CD8-positive, alpha-beta T cell (primary cell): ENCODE measurements at regions of chr17 and their contacts with region 1.

Region 1: GRCh38 chr17:38674749-38675615 is at the start of gene EPOP:
- DNase-seq: peak; percentile 51 to 91 (median 80)
- ATAC-seq: peak; percentile 80
- H3K4me3 ChIP-seq: peak within 1 kb of the TSS; percentile 34 to 58
- H3K4me3 Mint-ChIP-seq: peak within 1 kb of the TSS; percentile 75
- H3K27ac ChIP-seq: no peak within 1 kb of the TSS
- H3K27ac Mint-ChIP-seq: no peak within 1 kb of the TSS
- H3K4me1 ChIP-seq: peaks cover 17% of the 10 kb centered on the region
- H3K4me1 Mint-ChIP-seq: peaks cover 26% of the 10 kb centered on the region
- H3K27me3 ChIP-seq: peaks cover 4 to 14% of the 10 kb centered on the region in 2 experiments
- H3K27me3 Mint-ChIP-seq: peaks cover 28% of the 10 kb centered on the region
- CTCF ChIP-seq: no peak
- total RNA-seq, gene EPOP: 0.89 to 0.98 TPM

Region 2: GRCh38 chr17:38557836-38558727 is 116.9 kb before region 1 on chr17:
- CTCF ChIA-PET with region 1: interaction called, 4 read pairs
- POLR2A ChIA-PET with region 1: interaction called, 3 read pairs
- intact Hi-C with region 1: loop called in 1 of 2 experiments (anchors 2 kb)
- DNase-seq: peak; percentile 75 to 94 (median 88)
- ATAC-seq: peak; percentile 74
- H3K4me3 ChIP-seq: peak overlapping the region; percentile 60 to 77
- H3K4me3 Mint-ChIP-seq: peak overlapping the region; percentile 92
- H3K27ac ChIP-seq: no peak overlapping the region
- H3K27ac Mint-ChIP-seq: no peak overlapping the region
- H3K4me1 ChIP-seq: peaks cover 28% of the 10 kb centered on the region
- H3K4me1 Mint-ChIP-seq: peaks cover 26% of the 10 kb centered on the region
- H3K27me3 ChIP-seq: peaks cover 17 to 27% of the 10 kb centered on the region in 2 experiments
- H3K27me3 Mint-ChIP-seq: peaks cover 24% of the 10 kb centered on the region
- CTCF ChIP-seq: peak; percentile 93

Region 3: DNA sequence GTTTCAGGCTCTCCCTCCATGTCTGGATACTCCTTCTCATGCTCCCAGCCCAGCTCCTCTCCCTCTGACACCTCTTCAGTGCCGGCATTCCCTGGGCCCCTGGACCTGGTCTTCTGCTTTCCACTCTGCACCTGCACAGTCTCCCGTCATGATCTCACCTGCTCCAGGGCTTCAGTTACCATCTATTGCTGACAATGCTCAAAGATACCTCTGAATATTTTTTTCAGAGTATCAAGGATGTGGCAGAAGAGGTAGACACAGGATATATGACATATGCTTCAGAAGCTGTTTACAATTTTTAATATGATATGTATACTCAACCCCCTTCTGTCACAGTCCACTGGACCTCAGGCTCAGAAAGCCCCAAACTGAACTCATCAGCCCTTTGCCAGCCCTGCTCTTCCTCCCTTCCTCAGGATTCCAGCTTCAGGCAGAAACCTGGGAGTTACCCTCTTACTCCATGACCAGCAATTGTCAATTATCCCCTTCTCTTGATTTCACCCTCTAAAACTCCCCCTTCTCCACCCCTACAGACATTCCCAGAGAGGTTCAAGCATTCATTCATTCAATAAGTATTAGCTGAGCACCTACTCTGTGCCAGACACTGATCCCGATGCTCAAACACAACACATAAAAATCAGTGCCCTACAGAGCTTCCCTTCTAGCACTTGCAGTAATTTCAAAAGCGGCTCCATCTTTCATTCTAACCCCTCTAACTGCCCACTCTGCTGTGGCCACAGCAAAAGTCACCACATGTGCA is 22.3 kb after region 1 on chr17:
- CTCF ChIA-PET with region 1: interaction called, 19 read pairs
- POLR2A ChIA-PET with region 1: interaction called, 3 read pairs
- intact Hi-C with region 1: loop called (anchors 1 kb)
- DNase-seq: peak in 1 of 9 experiments; percentile 32
- ATAC-seq: no peak
- H3K4me3 ChIP-seq: no peak overlapping the region
- H3K4me3 Mint-ChIP-seq: peak overlapping the region; percentile 8
- H3K27ac ChIP-seq: no peak overlapping the region
- H3K27ac Mint-ChIP-seq: peak overlapping the region; percentile 79
- H3K4me1 ChIP-seq: peaks cover 24% of the 10 kb centered on the region
- H3K4me1 Mint-ChIP-seq: peaks cover 39% of the 10 kb centered on the region
- H3K27me3 ChIP-seq: no peaks in the 10 kb centered on the region
- H3K27me3 Mint-ChIP-seq: no peaks in the 10 kb centered on the region
- CTCF ChIP-seq: no peak

Region 4: DNA sequence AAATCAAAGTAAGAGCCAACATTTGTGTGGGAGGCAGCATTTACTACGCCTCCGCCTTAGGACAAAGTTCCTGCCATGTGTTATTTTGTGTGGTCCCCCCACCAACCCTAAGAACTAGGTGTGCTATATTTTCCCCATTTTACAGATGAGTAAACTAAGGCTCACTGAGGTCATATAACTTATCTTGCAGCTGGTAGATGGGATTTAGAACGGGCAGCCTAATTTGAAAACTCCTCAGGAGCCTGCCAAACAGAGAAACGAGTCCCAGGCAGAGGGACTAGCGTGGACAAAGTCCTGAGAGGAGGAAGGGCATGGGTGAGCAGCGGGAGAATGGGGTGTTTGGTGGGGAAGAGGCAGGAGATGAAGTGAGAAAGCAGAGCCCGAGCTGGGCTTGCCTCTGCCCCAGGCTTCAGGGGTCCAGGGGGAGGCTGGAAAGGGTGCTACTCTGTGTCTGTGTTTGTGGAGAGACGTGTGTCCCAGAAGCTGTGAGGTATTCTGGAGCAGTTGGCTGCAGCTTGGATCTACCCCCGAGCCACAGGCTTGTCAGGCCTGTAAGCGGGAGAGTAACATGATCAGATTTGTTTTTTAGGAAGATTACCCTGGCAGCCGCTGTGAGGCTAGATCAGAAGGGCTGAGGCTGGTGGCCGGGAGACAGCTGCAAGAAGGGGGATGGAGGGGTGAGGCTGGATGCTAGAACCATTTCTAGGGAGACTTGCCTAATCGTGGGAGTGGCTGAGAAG is 35.1 kb after region 1 on chr17:
- CTCF ChIA-PET with region 1: interaction called, 11 read pairs
- POLR2A ChIA-PET with region 1: interaction called, 6 read pairs
- intact Hi-C with region 1: no loop called
- DNase-seq: no peak
- ATAC-seq: no peak
- H3K4me3 ChIP-seq: no peak overlapping the region
- H3K4me3 Mint-ChIP-seq: no peak overlapping the region
- H3K27ac ChIP-seq: no peak overlapping the region
- H3K27ac Mint-ChIP-seq: peak overlapping the region; percentile 84
- H3K4me1 ChIP-seq: peaks cover 32% of the 10 kb centered on the region
- H3K4me1 Mint-ChIP-seq: peaks cover 42% of the 10 kb centered on the region
- H3K27me3 ChIP-seq: no peaks in the 10 kb centered on the region
- H3K27me3 Mint-ChIP-seq: no peaks in the 10 kb centered on the region
- CTCF ChIP-seq: no peak

Region 5: DNA sequence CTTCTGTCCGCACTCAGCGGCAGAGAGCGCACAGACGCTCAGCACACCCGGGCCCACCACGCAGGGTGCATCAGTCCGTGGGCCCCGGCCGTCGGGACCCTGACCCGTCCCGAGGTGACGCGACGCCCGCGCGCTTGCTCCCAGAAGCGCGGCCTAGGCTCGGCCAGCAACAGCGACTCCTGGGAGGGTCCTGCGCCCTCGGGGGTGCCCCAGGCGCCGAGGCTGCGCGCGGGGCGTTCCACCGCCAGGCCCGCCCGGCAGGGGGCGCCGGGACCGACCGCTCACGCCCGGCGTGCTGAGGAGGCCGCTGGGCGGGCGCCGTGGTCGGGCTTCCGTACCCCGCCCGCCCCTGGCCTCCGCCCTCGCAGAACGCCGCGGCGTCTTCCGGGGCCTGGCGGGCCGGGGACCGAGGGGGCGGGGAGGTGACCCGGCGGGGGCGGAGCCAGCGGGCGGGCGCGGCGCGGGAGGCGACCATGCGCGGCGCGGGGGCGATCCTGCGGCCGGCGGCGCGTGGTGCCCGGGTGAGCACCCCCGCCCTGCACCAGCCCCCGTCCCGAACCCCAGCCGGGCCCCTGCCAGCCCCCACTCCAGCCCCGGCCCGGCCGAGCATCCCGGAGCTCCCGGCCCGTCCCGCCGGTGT is 55.0 kb after region 1 on chr17 and contains the start of gene CISD3:
- CTCF ChIA-PET with region 1: interaction called, 162 read pairs
- POLR2A ChIA-PET with region 1: interaction called, 11 read pairs
- intact Hi-C with region 1: loop called (anchors 1 kb)
- DNase-seq: peak; percentile 61 to 95 (median 83)
- ATAC-seq: peak; percentile 74
- H3K4me3 ChIP-seq: peak within 1 kb of the TSS; percentile 74 to 80
- H3K4me3 Mint-ChIP-seq: peak within 1 kb of the TSS; percentile 93
- H3K27ac ChIP-seq: peak within 1 kb of the TSS; percentile 53 to 94
- H3K27ac Mint-ChIP-seq: peak within 1 kb of the TSS; percentile 97
- H3K4me1 ChIP-seq: peaks cover 74% of the 10 kb centered on the region
- H3K4me1 Mint-ChIP-seq: peaks cover 80% of the 10 kb centered on the region
- H3K27me3 ChIP-seq: no peaks in the 10 kb centered on the region
- H3K27me3 Mint-ChIP-seq: no peaks in the 10 kb centered on the region
- CTCF ChIP-seq: peak; percentile 61
- total RNA-seq, gene CISD3: 3.5 to 5.7 TPM

Region 6: GRCh38 chr17:38809828-38810227 is 134.8 kb after region 1 on chr17:
- CTCF ChIA-PET with region 1: no interaction called
- POLR2A ChIA-PET with region 1: no interaction called
- intact Hi-C with region 1: no loop called
- DNase-seq: no peak
- ATAC-seq: no peak
- H3K4me3 ChIP-seq: no peak overlapping the region
- H3K4me3 Mint-ChIP-seq: no peak overlapping the region
- H3K27ac ChIP-seq: no peak overlapping the region
- H3K27ac Mint-ChIP-seq: no peak overlapping the region
- H3K4me1 ChIP-seq: no peaks in the 10 kb centered on the region
- H3K4me1 Mint-ChIP-seq: no peaks in the 10 kb centered on the region
- H3K27me3 ChIP-seq: no peaks in the 10 kb centered on the region
- H3K27me3 Mint-ChIP-seq: no peaks in the 10 kb centered on the region
- CTCF ChIP-seq: no peak